ENCODE measurements at regions of chr6 and their contacts with region 1.

Region 1: DNA sequence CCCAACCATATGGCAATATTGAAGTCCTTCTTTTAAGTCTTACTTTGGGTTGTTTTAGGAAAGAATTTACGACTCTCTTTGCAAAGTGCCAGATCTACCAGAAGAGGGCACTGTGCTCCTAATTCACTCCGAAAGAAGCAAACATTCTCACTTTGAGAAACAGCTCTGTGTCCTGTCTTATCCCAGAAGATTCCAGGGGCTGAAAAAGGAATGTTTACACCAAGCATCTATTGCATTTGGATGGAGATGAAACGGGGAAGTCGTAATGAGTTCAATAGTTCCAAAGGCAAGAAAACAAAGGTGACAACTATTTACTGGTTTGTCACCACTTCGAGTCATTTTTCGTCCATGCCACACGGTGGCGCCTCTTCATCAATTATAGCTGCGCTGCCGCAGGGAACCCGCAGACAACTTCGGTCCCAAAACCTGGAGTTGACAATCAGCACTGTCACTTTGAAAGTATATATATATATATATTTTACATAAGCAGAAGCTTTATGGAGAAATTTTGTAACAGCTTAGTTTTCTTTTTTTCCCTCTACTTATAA is 121.6 kb downstream of the MOXD1 start:
- DNase-seq: peak; percentile 76
- ATAC-seq: peak; percentile 91
- H3K4me3 Mint-ChIP-seq: peak overlapping the region; percentile 66
- H3K27ac Mint-ChIP-seq: no peak overlapping the region
- H3K4me1 Mint-ChIP-seq: peaks cover 2% of the 10 kb centered on the region
- H3K27me3 Mint-ChIP-seq: peaks cover 21% of the 10 kb centered on the region

Region 2: DNA sequence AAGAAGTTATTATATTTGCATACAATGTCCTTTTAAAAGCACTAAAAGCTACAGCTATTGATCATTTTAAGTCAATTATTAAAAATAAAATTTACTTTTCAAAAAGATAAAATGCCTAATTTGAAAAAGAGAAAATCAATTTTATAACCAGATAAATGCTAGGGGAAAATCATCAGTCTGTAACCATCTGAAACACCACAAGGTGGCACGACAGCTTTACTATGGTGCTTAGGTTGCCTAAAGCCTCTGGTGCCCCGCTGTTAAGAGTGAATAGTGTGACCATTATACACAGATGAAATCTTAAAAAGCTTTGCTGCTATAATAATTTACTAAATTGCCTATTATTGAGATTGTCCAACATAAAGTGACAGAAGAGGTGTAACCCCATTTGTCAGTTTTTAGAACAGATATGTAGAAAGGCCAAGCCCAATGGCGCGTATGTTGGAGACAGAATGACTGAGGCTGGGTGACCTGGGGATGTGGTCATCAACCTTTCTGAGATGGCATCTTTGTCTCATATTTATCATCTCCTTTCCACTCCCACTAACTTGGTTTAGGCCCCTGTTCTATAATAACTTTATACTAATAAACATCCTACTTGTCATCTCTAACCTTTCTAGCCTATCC is 20.8 kb after region 1 on chr6:
- CTCF ChIA-PET with region 1: interaction called, 38 read pairs
- DNase-seq: no peak
- ATAC-seq: no peak
- H3K4me3 Mint-ChIP-seq: no peak overlapping the region
- H3K27ac Mint-ChIP-seq: no peak overlapping the region
- H3K4me1 Mint-ChIP-seq: no peaks in the 10 kb centered on the region
- H3K27me3 Mint-ChIP-seq: peaks cover 21% of the 10 kb centered on the region

Region 3: GRCh38 chr6:132483779-132484679 is 204.4 kb after region 1 on chr6:
- CTCF ChIA-PET with region 1: interaction called, 133 read pairs
- DNase-seq: no peak
- ATAC-seq: peak; percentile 71
- H3K4me3 Mint-ChIP-seq: no peak overlapping the region
- H3K27ac Mint-ChIP-seq: no peak overlapping the region
- H3K4me1 Mint-ChIP-seq: peaks cover 15% of the 10 kb centered on the region
- H3K27me3 Mint-ChIP-seq: no peaks in the 10 kb centered on the region

Region 4: DNA sequence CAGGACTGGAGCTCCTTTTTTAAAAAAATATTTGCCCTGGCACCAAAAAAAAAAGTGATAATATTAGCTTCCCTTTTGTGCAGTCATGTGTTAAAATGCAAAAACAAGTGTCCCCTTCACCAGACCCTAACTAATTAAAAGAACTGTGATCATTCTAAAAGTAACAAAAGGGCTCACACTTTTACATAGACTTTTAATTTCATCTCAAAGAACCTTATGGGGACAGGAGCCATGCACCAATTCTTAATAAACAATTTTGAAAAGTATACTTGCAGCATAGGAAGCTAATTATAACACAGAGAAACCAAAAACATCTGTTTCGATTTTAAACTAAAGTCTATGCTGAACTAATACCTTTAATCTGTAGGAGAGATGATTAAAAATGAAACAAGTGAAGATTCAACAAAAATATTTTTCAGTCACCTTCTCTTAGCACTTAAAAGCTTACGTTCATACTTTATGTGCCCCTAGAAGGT is 216.0 kb after region 1 on chr6:
- CTCF ChIA-PET with region 1: interaction called, 19 read pairs
- DNase-seq: no peak
- ATAC-seq: peak; percentile 48
- H3K4me3 Mint-ChIP-seq: no peak overlapping the region
- H3K27ac Mint-ChIP-seq: peak overlapping the region; percentile 61
- H3K4me1 Mint-ChIP-seq: peaks cover 30% of the 10 kb centered on the region
- H3K27me3 Mint-ChIP-seq: no peaks in the 10 kb centered on the region

Measured in activated CD8-positive, alpha-beta memory T cell treated with anti-CD3 and anti-CD28 coated beads, Interleukin-2, amount 10 ng/mL, durations not matched to agents 7 days and 5 days (primary cell).